Caco-2 (cell line): ENCODE measurements at regions of chr2 and their contacts with region 1.

Region 1: GRCh38 chr2:73033766-73034381 is 37.6 kb downstream of the SFXN5 start:
- DNase-seq: no peak
- H3K4me3 ChIP-seq: no peak overlapping the region
- H3K4me3 Mint-ChIP-seq: no peak overlapping the region
- H3K27ac Mint-ChIP-seq: peak overlapping the region; percentile 45
- H3K4me1 ChIP-seq: peaks cover 40% of the 10 kb centered on the region
- H3K4me1 Mint-ChIP-seq: peaks cover 33% of the 10 kb centered on the region
- H3K27me3 ChIP-seq: no peaks in the 10 kb centered on the region
- H3K27me3 Mint-ChIP-seq: no peaks in the 10 kb centered on the region
- CTCF ChIP-seq: no peak

Region 2: DNA sequence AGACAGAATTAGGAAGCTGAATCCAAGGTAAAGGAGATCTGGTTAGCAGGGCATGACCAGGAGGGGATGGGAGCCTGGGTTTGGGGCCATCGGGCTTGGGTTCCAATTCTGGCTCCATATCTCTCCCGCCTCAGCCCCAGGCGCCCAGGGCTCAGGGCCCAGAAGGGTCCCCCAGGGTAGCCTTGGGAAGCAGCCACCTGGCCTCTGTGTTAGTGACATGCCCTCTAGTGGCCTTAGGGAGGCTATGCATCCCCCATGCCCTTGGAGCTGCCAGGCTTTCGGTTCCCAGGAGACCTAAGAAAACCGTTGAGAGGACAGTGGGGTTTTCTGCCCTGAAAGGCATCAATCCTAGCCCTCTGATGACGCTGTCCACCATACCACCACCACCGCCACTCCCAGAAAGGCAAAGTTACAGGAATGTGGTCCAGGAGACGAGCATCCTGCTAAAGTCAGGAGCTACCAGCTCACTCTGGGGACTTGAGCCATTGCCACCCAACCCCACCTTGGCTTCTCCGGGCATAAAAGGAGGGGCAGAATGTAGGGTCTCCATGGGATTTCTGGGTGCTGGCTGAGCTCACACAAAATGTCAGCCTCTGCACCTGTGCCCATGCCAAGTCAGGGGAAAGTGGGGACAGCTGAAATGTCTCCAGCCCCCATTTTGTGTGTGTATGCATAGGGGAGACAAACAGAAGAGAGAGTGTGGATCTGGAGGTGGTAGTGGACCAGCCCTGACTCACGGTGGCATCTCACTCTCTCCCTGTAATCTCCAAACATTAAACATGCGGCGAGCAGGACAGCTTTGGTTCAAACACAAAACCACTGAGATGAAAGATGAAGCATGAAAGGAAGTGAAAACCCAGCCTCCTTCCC is 60.1 kb before region 1 on chr2:
- CTCF ChIA-PET with region 1: no interaction called
- POLR2A ChIA-PET with region 1: no interaction called
- intact Hi-C with region 1: loop called (anchors 1 kb)
- DNase-seq: peak; percentile 67 to 72
- H3K4me3 ChIP-seq: no peak overlapping the region
- H3K4me3 Mint-ChIP-seq: no peak overlapping the region
- H3K27ac Mint-ChIP-seq: no peak overlapping the region
- H3K4me1 ChIP-seq: no peaks in the 10 kb centered on the region
- H3K4me1 Mint-ChIP-seq: no peaks in the 10 kb centered on the region
- H3K27me3 ChIP-seq: no peaks in the 10 kb centered on the region
- H3K27me3 Mint-ChIP-seq: no peaks in the 10 kb centered on the region
- CTCF ChIP-seq: peak; percentile 87 to 95

Region 3: GRCh38 chr2:72993147-72993932 is 40.5 kb before region 1 on chr2:
- CTCF ChIA-PET with region 1: interaction called, 3 read pairs
- POLR2A ChIA-PET with region 1: no interaction called
- intact Hi-C with region 1: loop called (anchors 2 kb)
- DNase-seq: peak in 1 of 2 experiments; percentile 70
- H3K4me3 ChIP-seq: no peak overlapping the region
- H3K4me3 Mint-ChIP-seq: no peak overlapping the region
- H3K27ac Mint-ChIP-seq: no peak overlapping the region
- H3K4me1 ChIP-seq: no peaks in the 10 kb centered on the region
- H3K4me1 Mint-ChIP-seq: no peaks in the 10 kb centered on the region
- H3K27me3 ChIP-seq: no peaks in the 10 kb centered on the region
- H3K27me3 Mint-ChIP-seq: no peaks in the 10 kb centered on the region
- CTCF ChIP-seq: peak; percentile 78 to 98

Region 4: GRCh38 chr2:73000808-73001570 is 32.9 kb before region 1 on chr2:
- CTCF ChIA-PET with region 1: no interaction called
- POLR2A ChIA-PET with region 1: no interaction called
- intact Hi-C with region 1: loop called (anchors 1 kb)
- DNase-seq: no peak
- H3K4me3 ChIP-seq: no peak overlapping the region
- H3K4me3 Mint-ChIP-seq: no peak overlapping the region
- H3K27ac Mint-ChIP-seq: peak overlapping the region; percentile 36
- H3K4me1 ChIP-seq: peaks cover 14% of the 10 kb centered on the region
- H3K4me1 Mint-ChIP-seq: peaks cover 11% of the 10 kb centered on the region
- H3K27me3 ChIP-seq: no peaks in the 10 kb centered on the region
- H3K27me3 Mint-ChIP-seq: no peaks in the 10 kb centered on the region
- CTCF ChIP-seq: no peak

Region 5: DNA sequence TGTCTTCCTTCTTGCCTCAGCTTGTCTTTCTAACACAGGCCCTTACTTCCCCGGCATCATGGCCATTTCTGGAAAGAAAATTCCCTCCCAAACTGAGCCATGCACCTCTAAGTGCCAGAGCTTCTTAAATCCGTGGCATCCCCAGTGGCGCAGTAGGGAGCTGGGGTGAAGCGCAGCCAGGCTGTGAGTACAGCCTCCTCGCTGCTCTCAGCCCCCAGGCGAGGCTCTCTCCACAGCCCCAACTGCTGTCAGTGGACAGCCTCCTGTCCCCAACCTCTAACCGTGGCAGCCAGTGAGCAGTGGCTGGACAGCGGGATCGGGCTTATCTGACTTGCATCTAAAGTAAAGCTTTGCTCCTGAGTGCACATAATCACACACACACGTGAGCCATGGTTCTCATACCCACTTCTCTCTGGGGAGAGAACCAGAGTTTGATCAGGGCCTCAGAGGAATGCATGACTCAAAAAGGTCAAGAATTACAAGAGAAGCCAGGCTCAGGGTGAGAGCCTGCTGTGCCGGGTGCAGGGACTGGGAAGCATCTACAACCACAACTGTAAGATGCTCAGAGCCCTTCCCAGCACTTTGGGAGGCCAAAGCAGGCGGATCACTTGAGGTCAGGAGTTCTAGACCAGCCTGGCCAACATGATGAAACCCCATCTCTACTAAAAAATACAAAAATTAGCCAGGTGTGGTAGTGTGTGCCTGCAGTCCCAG is 13.1 kb before region 1 on chr2:
- CTCF ChIA-PET with region 1: no interaction called
- POLR2A ChIA-PET with region 1: no interaction called
- intact Hi-C with region 1: loop called (anchors 1 kb)
- DNase-seq: peak in 1 of 2 experiments; percentile 28
- H3K4me3 ChIP-seq: no peak overlapping the region
- H3K4me3 Mint-ChIP-seq: no peak overlapping the region
- H3K27ac Mint-ChIP-seq: peak overlapping the region; percentile 66
- H3K4me1 ChIP-seq: peaks cover 16% of the 10 kb centered on the region
- H3K4me1 Mint-ChIP-seq: no peaks in the 10 kb centered on the region
- H3K27me3 ChIP-seq: no peaks in the 10 kb centered on the region
- H3K27me3 Mint-ChIP-seq: no peaks in the 10 kb centered on the region
- CTCF ChIP-seq: no peak

Region 6: DNA sequence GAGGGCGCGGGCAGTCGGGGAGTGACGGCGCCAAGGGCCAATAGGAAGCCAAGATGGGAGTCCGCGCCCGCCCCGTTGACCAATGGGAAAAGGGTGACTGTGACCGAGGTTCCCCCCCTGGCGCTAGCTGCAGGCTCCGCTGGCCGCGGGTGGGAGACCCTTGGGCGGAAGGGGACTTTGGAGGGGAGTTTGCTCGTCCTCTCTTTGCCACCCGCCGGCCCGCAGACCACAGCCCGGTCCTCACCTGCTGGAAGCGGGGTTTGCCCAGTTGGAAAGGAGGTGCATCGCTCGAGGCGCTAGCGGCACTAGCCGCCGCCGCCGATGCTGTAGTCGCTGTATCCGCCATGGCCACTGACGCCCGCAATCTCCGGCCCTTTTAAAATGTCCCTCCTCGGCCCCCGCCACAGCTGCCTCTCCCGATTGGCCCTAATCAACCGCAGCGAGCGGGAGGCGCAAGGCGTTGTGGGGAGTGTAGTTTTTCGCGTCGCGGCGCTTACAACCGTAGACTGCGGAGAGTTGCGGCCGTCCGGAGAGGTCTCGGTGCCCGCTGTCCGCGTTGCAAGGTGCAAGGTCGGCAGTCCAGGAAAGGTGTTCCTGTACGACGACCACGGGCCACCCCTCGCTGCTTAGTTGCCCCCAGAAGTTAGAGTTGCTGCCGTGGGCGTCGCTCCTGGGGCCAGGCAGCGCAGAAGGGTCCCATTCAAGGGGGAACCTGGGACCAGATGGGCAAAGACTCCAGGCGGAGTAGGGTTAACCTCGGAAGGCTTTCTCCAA is 37.7 kb after region 1 on chr2 and contains the start of gene SFXN5:
- CTCF ChIA-PET with region 1: interaction called, 6 read pairs
- POLR2A ChIA-PET with region 1: interaction called, 5 read pairs
- intact Hi-C with region 1: loop called (anchors 1 kb)
- DNase-seq: peak; percentile 97 to 99
- H3K4me3 ChIP-seq: peak within 1 kb of the TSS; percentile 94
- H3K4me3 Mint-ChIP-seq: peak within 1 kb of the TSS; percentile 78
- H3K27ac Mint-ChIP-seq: peak within 1 kb of the TSS; percentile 91
- H3K4me1 ChIP-seq: 0 out of 2 replicates have a peak, but pooled peaks cover 6% of the 10 kb centered on the region
- H3K4me1 Mint-ChIP-seq: peaks cover 18% of the 10 kb centered on the region
- H3K27me3 ChIP-seq: no peaks in the 10 kb centered on the region
- H3K27me3 Mint-ChIP-seq: no peaks in the 10 kb centered on the region
- CTCF ChIP-seq: peak in 1 of 2 experiments; percentile 38
- total RNA-seq, gene SFXN5: 26.8 and 31.3 TPM in 2 replicates

Region 7: GRCh38 chr2:73085691-73086360 is 52.0 kb after region 1 on chr2:
- CTCF ChIA-PET with region 1: no interaction called
- POLR2A ChIA-PET with region 1: no interaction called
- intact Hi-C with region 1: no loop called
- DNase-seq: peak; percentile 87 to 89
- H3K4me3 ChIP-seq: no peak overlapping the region
- H3K4me3 Mint-ChIP-seq: no peak overlapping the region
- H3K27ac Mint-ChIP-seq: no peak overlapping the region
- H3K4me1 ChIP-seq: peaks cover 27% of the 10 kb centered on the region
- H3K4me1 Mint-ChIP-seq: peaks cover 24% of the 10 kb centered on the region
- H3K27me3 ChIP-seq: no peaks in the 10 kb centered on the region
- H3K27me3 Mint-ChIP-seq: no peaks in the 10 kb centered on the region
- CTCF ChIP-seq: peak; percentile 93 to 95